Mammary epithelial cell (primary cell): ENCODE measurements at regions of chr2 and their contacts with region 1.

Region 1: DNA sequence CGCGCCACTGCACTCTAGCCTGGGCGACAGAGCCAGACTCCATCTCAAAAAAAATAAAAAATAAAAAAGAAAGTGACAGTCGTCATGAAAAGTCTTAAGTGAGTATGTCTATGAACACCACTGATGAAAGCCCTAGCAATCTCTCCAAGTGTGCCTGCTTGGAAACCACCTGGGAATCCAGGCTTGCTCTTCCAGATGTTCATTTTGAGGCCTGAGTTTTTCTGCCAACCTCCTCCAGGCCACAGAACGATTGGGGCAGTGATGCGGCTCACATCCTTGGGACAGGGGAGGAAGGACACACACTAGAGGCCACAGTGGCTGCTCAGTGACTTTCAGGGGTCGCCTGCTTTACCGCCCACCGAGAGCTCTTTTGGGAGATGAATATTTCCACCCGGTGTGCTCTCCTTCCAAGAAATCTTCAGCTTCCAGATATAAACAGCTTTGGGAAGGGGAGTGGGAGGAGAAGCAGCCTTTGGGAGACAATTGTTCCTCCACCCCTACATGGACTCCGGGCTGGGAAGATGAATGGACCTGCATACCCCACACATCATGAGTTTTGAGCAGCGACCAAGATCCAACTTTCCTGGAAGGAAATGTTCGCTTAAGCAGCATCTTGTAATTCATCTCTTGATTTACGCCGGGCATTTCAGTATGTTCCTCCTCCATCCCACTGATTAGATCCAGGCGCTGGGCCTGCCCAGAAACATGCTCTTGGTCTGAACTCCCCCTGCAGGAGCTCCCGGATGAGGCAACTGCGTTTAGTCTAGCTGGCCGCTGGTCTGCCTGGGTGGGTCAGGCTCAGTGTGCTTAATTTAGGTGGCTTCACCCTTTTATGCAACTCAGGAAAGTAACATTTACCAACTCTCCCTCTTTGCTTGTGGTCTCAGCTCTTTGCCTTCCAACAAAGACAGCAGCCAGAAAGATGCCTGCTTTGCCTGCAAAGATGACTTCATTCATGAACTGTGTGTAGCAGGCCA is 6.2 kb upstream of the ARMC9 start:
- DNase-seq: no peak
- H3K4me3 ChIP-seq: no peak overlapping the region
- H3K27ac ChIP-seq: no peak overlapping the region
- H3K4me1 ChIP-seq: peaks cover 6% of the 10 kb centered on the region
- H3K27me3 ChIP-seq: no peaks in the 10 kb centered on the region
- CTCF ChIP-seq: no peak

Region 2: GRCh38 chr2:231029563-231029962 is 162.6 kb before region 1 on chr2:
- CTCF ChIA-PET with region 1: no interaction called
- dilution Hi-C with region 1: no loop called
- in situ Hi-C with region 1: no loop called
- intact Hi-C with region 1: no loop called
- DNase-seq: no peak
- H3K4me3 ChIP-seq: no peak overlapping the region
- H3K27ac ChIP-seq: no peak overlapping the region
- H3K4me1 ChIP-seq: no peaks in the 10 kb centered on the region
- H3K27me3 ChIP-seq: peaks cover 2% of the 10 kb centered on the region
- CTCF ChIP-seq: no peak

Region 3: GRCh38 chr2:231084565-231084964 is 107.6 kb before region 1 on chr2:
- CTCF ChIA-PET with region 1: no interaction called
- dilution Hi-C with region 1: loop called (anchors 5 kb)
- in situ Hi-C with region 1: no loop called
- intact Hi-C with region 1: no loop called
- DNase-seq: no peak
- H3K4me3 ChIP-seq: no peak overlapping the region
- H3K27ac ChIP-seq: no peak overlapping the region
- H3K4me1 ChIP-seq: no peaks in the 10 kb centered on the region
- H3K27me3 ChIP-seq: no peaks in the 10 kb centered on the region
- CTCF ChIP-seq: no peak

Region 4: GRCh38 chr2:231170055-231170454 is 22.1 kb before region 1 on chr2:
- CTCF ChIA-PET with region 1: interaction called, 12 read pairs
- dilution Hi-C with region 1: no loop called
- in situ Hi-C with region 1: no loop called
- intact Hi-C with region 1: no loop called
- DNase-seq: no peak
- H3K4me3 ChIP-seq: no peak overlapping the region
- H3K27ac ChIP-seq: no peak overlapping the region
- H3K4me1 ChIP-seq: no peaks in the 10 kb centered on the region
- H3K27me3 ChIP-seq: no peaks in the 10 kb centered on the region
- CTCF ChIP-seq: no peak